Kidney (tissue), 22 donors: ENCODE measurements at regions of chr4 and their contacts with region 1.

Region 1: DNA sequence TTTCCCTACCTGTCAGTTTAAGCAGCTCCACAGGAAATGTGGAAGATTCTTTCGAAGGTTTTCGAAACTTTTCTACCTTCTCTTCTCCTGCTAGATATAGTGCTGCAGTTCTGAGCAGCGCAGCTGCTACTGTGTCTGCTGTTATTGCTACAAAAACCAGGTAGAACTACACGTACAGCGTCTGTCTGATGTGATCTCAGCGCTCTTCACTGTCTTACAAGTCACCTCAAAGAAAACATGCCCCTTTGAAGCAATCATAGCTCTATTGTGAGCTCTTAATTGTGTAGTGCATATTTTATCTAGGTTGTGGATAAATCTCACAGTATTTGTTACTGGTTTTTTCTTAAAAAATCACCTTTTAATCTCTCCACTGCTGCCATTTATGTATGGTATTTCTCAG is 147.6 kb upstream of the BMPR1B start:
- DNase-seq: no peak
- H3K4me3 ChIP-seq: no peak overlapping the region
- H3K27ac ChIP-seq: no peak overlapping the region
- H3K4me1 ChIP-seq: no peaks in the 10 kb centered on the region
- H3K27me3 ChIP-seq: no peaks in the 10 kb centered on the region
- CTCF ChIP-seq: no peak

Region 2: GRCh38 chr4:94406668-94407437 is 203.3 kb before region 1 on chr4:
- intact Hi-C with region 1: loop called (anchors 10 kb)
- DNase-seq: peak in 4 of 5 donors; percentile 56 to 92 (median 80)
- H3K4me3 ChIP-seq: no peak overlapping the region
- H3K27ac ChIP-seq: no peak overlapping the region
- H3K4me1 ChIP-seq: no peaks in the 10 kb centered on the region
- H3K27me3 ChIP-seq: no peaks in the 10 kb centered on the region
- CTCF ChIP-seq: peak; percentile 84